Right lobe of liver (tissue), 6 donors: ENCODE measurements at regions of chr17 and their contacts with region 1.

Region 1: DNA sequence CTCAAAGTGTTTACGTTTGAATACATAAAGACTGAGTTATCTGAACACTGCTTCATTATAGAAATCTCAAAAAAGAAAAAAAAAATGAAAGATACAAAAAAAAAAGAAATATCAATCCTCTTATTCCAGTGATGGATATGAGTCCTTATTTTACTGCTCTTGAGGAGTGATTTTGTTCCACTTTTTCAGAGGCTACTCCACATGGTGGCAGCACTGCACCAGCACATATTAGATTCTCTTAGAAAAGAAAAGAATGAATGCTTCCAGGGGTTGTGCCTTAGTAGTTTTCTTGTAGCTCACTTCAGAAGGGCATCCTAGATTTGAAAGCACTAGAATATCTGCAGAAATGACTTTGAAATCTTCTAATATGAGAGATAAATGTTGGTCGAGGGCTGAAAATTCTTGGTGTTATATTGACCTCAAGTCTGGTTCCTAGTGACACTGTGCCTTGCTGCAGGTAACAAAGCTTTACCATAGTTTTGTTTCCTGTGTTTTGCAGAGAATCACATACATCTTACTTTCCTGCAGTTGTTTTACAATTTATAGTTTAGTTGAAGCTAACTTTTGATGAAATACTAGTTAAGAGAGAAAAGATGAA is 25.9 kb downstream of the AP2B1 start:
- DNase-seq: peak in 2 of 3 donors; percentile 37 to 56
- ATAC-seq: peak; percentile 66 to 77 (median 70)
- H3K4me3 ChIP-seq: no peak overlapping the region
- H3K27ac ChIP-seq: no peak overlapping the region
- H3K4me1 ChIP-seq: no peaks in the 10 kb centered on the region
- H3K27me3 ChIP-seq: no peaks in the 10 kb centered on the region
- CTCF ChIP-seq: peak; percentile 69 to 72 (median 71)
- POLR2A ChIP-seq: no peak

Region 2: DNA sequence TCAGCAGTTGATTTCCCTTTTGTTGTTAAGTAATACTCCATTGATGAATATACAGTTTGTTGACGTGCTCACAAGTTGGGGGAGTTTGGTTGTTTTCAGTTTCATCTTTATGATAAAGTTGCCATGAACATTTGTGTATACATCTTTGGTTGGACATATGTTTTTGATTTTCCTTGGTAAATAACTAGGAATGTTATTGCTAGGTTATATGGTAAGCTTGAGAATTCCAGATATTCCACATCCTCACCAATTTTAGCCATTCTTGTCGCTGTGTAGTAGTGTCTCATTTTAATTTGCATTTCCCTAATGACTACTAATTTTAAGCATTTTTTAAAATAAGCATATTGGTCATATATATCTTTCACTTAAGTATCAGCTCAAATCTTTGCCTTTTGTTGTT is 63.4 kb after region 1 on chr17:
- intact Hi-C with region 1: no loop called
- DNase-seq: no peak
- ATAC-seq: no peak
- H3K4me3 ChIP-seq: no peak overlapping the region
- H3K27ac ChIP-seq: no peak overlapping the region
- H3K4me1 ChIP-seq: peaks cover 0 to 15% (median 0%) of the 10 kb centered on the region in 4 donors
- H3K27me3 ChIP-seq: no peaks in the 10 kb centered on the region
- CTCF ChIP-seq: no peak
- POLR2A ChIP-seq: no peak

Region 3: GRCh38 chr17:35747540-35748017 is 134.6 kb after region 1 on chr17:
- intact Hi-C with region 1: loop called (anchors 5 kb)
- DNase-seq: peak in 2 of 3 donors; percentile 67 to 78
- ATAC-seq: peak; percentile 80 to 91 (median 88)
- H3K4me3 ChIP-seq: no peak overlapping the region
- H3K27ac ChIP-seq: no peak overlapping the region
- H3K4me1 ChIP-seq: peaks cover 0 to 4% (median 0%) of the 10 kb centered on the region in 4 donors
- H3K27me3 ChIP-seq: no peaks in the 10 kb centered on the region
- CTCF ChIP-seq: peak; percentile 81 to 92 (median 88)
- POLR2A ChIP-seq: no peak

Region 4: GRCh38 chr17:35915153-35915969 is 302.3 kb after region 1 on chr17:
- intact Hi-C with region 1: no loop called
- DNase-seq: peak in 1 of 3 donors; percentile 73
- ATAC-seq: peak; percentile 74 to 83 (median 80)
- H3K4me3 ChIP-seq: no peak overlapping the region
- H3K27ac ChIP-seq: peak overlapping the region; percentile 43 to 77 (median 49)
- H3K4me1 ChIP-seq: peaks cover 0 to 47% (median 11%) of the 10 kb centered on the region in 4 donors
- H3K27me3 ChIP-seq: no peaks in the 10 kb centered on the region
- CTCF ChIP-seq: no peak
- POLR2A ChIP-seq: no peak